SK-MEL-5 (cell line): ENCODE measurements at regions of chr15 and their contacts with region 1.

Region 1: DNA sequence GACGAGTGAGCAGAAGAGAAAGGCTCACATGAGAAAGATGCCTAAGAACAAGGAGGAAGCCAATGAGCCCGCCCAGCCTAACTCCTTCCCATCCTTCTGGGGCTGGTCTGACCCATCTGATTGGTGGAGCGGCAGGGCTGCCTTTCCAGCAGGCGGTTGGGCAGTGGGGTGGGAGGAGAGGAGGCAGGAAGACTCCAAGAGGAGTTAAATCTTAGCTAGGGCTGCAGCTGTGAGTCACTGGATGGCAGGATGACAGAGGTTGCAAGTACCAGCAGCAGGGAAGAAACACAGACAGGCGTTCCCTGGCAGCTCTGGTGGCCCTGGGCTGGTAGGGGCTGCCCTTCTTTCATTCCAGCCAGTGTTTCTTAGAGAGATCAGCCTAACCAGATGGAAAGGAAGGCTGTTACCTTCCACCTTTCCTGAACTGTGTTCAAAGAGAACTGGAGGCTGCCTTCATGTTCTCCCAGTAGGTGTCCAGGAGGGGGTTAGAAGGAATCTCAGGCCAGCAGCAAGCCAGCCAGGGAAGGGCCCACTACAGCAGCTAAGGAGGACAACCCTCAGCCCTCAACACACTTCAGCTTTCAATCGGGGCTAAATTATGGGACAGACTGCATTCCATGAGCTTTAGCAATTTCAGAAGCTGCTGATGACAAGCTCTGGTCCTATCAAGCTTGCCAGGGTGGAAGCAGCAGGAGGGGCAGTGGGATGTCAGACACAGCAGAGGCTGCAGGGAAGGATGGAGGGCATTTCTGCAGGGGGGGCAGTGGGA is 50.3 kb downstream of the CHSY1 start:
- DNase-seq: peak; percentile 51

Region 2: DNA sequence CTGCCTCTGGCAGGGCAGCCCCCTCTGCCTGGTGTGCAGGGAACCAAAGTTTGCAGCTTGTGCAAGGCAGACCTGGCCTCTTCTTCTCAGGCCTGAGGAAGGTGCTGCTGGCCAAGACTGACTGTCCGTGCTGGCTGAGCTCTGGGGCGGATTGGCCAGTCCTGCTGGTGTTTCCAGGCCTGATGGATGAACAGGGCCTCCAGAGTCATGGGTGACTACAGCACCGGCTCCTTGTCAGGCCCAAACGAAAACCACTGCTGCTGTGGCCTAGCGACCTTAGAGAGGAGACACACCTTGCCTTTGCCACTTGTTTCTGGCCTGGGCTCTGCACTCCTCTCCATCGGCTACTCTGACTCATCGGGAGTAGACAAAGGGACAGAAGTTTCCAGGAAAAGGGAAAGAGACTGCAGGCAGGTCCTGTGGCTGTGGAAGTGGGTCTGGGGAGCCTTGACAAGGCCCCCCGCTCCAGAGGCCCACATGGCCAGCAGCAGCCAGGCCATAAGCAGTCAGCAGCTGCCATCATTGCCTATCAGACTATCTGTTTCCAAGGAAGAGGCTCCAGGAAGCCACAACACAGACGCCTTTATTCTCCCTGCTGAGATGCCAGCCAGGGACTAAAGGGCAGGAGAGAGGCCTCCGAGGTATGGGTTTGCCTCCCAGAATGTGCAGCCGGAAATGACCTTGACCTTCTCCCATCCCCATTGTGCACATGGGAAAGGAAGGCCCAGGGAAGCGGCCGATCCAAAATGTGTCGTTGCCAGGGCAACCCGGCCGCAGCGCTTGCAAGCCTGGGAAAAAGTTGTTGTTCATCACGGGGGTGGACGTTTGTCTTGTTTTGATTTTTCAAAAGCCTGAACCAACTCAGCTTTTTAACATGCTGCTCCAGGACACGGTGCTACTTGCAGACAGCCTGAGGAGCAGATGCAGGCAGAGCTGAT is 110.2 kb before region 1 on chr15:
- in situ Hi-C with region 1: loop called (anchors 10 kb)
- DNase-seq: peak; percentile 93

Region 3: GRCh38 chr15:101115786-101116680 is 85.6 kb before region 1 on chr15:
- in situ Hi-C with region 1: no loop called
- DNase-seq: no peak